ENCODE measurements at regions of chr15 and their contacts with region 1.

Region 1: DNA sequence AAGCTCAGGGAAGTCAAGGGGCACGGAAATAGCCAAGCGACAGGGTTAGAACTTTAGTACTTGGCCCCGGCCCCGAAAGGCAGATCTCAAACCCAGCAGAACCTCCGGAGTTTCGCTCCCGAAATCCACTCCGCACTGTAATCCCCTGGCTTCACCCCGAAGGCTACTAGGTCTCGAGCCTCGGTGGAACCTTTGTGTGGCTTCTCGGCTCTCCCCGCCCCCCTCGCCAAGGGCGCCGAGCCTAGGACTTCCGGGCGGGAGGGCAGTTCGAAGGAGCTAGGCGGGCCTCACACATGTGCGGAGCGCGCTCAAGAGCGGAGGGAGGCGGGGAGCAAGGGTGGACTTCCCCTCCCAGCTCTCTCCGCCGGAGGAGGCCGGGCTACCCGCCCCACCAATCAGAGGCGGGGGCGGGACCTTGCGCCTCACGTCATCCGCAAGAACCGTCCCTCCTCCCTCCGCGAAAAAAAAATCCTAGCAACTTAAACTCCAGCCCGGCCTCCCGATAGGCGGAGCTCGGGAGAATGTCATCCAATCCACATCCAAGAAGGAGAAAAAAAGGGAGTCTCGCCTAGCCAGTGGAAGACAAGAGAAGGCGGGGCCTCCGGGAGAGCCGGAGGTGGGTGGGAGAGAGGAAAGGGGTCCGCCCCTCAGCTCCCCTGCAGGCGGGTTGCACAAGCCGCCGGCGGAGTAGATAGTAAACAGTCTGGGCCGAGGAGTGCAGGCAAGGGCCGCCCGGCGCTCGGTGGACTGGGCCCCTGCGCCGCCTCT is 2.4 kb upstream of the SIN3A start:
- DNase-seq: peak; percentile 86 to 100 (median 99)
- ATAC-seq: peak; percentile 54
- H3K4me3 ChIP-seq: peak overlapping the region; percentile 89
- H3K4me3 Mint-ChIP-seq: peak overlapping the region; percentile 91 to 99 (median 96)
- H3K27ac ChIP-seq: peak overlapping the region; percentile 97
- H3K27ac Mint-ChIP-seq: peak overlapping the region; percentile 94 to 99 (median 98)
- H3K4me1 ChIP-seq: peaks cover 17 to 29% of the 10 kb centered on the region in 2 donors
- H3K4me1 Mint-ChIP-seq: peaks cover 19 to 40% (median 30%) of the 10 kb centered on the region in 7 donors
- H3K27me3 ChIP-seq: no peaks in the 10 kb centered on the region
- H3K27me3 Mint-ChIP-seq: peaks cover 0 to 2% (median 0%) of the 10 kb centered on the region in 5 donors

Region 2: GRCh38 chr15:73991726-73992593 is 1461.9 kb before region 1 on chr15 and contains the start of gene STOML1:
- CTCF ChIA-PET with region 1: no interaction called
- POLR2A ChIA-PET with region 1: no interaction called
- intact Hi-C with region 1: loop called in 1 of 2 experiments (anchors 5 kb)
- DNase-seq: peak; percentile 85 to 99 (median 91)
- ATAC-seq: peak; percentile 91
- H3K4me3 ChIP-seq: peak within 1 kb of the TSS; percentile 68
- H3K4me3 Mint-ChIP-seq: peak within 1 kb of the TSS; percentile 82 to 100 (median 98)
- H3K27ac ChIP-seq: peak within 1 kb of the TSS; percentile 90
- H3K27ac Mint-ChIP-seq: peak within 1 kb of the TSS; percentile 72 to 99 (median 87)
- H3K4me1 ChIP-seq: peaks cover 33 to 35% of the 10 kb centered on the region in 2 donors
- H3K4me1 Mint-ChIP-seq: peaks cover 28 to 62% (median 49%) of the 10 kb centered on the region in 7 donors
- H3K27me3 ChIP-seq: no peaks in the 10 kb centered on the region
- H3K27me3 Mint-ChIP-seq: no peaks in the 10 kb centered on the region
- total RNA-seq, gene STOML1: 7.5 to 14.5 (median 12.3) TPM

Region 3: DNA sequence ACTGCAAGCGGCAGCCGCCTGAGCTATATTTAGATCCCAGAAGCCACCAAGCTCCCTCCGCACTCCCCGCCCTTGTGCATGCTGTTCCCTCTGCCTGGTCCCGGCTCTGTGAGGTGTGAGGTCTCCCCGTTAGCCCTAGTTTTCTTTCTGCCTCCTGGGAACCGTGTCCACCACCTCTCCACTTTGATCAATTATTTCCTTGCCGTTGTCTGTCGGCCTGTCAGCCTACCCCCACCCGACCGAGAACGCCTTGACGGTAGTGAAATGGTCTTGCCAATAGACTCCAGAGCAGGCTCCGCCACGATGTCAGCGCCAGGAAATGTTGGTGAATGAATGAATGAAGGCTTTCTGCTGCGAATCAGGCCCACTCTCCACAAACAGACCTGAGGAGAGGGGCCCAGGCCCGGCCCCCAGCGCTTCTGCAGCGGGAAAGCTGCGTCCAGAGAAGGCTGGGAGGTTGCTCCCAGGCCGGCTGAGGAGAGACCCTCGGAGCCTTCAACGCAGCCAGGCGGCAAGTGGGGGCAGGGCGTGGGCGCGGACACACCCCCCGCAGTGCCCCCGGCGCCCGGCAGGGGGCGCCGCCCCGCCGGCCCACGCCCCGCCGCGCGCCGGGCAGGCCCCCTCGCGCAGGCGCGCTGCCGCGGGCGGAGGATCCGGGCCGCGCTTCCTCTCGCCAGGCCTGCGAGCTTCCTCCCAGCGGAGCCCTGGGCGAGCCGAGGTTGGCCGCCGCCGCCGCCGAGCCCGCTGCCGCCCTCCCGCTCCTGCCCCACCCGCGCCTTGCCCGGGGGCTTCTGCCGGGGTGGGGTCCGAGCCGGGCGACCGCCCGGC is 672.2 kb before region 1 on chr15 and contains the start of gene CSK:
- CTCF ChIA-PET with region 1: no interaction called
- POLR2A ChIA-PET with region 1: no interaction called
- intact Hi-C with region 1: loop called (anchors 2 kb)
- DNase-seq: peak; percentile 68 to 90 (median 85)
- ATAC-seq: peak; percentile 80
- H3K4me3 ChIP-seq: peak within 1 kb of the TSS; percentile 91
- H3K4me3 Mint-ChIP-seq: peak within 1 kb of the TSS; percentile 87 to 99 (median 96)
- H3K27ac ChIP-seq: peak within 1 kb of the TSS; percentile 92
- H3K27ac Mint-ChIP-seq: peak within 1 kb of the TSS; percentile 90 to 100 (median 98)
- H3K4me1 ChIP-seq: peaks cover 62% of the 10 kb centered on the region in 2 donors
- H3K4me1 Mint-ChIP-seq: peaks cover 64 to 73% (median 70%) of the 10 kb centered on the region in 7 donors
- H3K27me3 ChIP-seq: no peaks in the 10 kb centered on the region
- H3K27me3 Mint-ChIP-seq: no peaks in the 10 kb centered on the region
- total RNA-seq, gene CSK: 163 to 421 (median 228) TPM

Region 4: DNA sequence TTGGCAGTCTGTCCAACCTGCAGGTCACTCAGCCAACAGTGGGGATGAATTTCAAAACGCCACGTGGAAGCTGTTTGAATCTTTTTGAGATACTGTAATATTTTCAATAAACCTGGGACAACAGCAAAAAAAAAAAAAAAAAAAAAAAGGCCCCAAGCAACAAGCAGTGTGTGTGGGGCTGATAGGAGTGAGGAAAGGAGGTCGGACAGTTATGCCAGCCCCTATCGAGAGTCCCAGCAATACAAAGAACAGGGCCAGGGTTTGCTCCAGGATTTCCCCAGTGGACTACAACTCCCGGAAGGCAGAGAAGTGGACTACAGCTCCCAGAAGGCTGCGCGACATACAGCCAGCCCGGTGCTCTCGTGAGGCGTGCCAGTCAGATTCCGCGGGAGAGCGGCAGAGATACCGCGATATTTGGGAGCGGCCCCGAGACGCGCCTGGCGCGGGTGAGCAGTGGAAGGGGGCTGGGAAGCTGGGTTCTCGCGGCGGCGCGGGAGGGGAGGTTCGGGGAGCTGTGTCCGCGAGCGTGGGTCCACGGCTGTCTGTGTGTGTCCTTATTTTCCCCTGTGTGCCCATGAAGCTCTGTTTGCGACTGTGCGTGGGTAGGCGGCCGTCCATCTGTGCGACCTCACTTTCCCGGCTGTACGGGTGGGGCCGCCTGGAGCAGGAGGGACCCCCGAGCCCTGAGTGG is 430.6 kb before region 1 on chr15 and contains the start of gene PPCDC:
- CTCF ChIA-PET with region 1: interaction called, 3 read pairs
- POLR2A ChIA-PET with region 1: interaction called, 3 read pairs
- intact Hi-C with region 1: loop called in 1 of 2 experiments (anchors 1 kb)
- DNase-seq: peak; percentile 79 to 94 (median 91)
- ATAC-seq: peak; percentile 100
- H3K4me3 ChIP-seq: peak within 1 kb of the TSS; percentile 84
- H3K4me3 Mint-ChIP-seq: peak within 1 kb of the TSS; percentile 81 to 99 (median 97)
- H3K27ac ChIP-seq: peak within 1 kb of the TSS; percentile 84
- H3K27ac Mint-ChIP-seq: peak within 1 kb of the TSS; percentile 87 to 98 (median 93)
- H3K4me1 ChIP-seq: no peaks in the 10 kb centered on the region
- H3K4me1 Mint-ChIP-seq: peaks cover 11 to 30% (median 26%) of the 10 kb centered on the region in 7 donors
- H3K27me3 ChIP-seq: no peaks in the 10 kb centered on the region
- H3K27me3 Mint-ChIP-seq: no peaks in the 10 kb centered on the region
- total RNA-seq, gene PPCDC: 11.7 to 31.3 (median 17.1) TPM

Region 5: GRCh38 chr15:75302318-75302717 is 151.6 kb before region 1 on chr15:
- CTCF ChIA-PET with region 1: no interaction called
- POLR2A ChIA-PET with region 1: no interaction called
- intact Hi-C with region 1: no loop called
- DNase-seq: no peak
- ATAC-seq: no peak
- H3K4me3 ChIP-seq: no peak overlapping the region
- H3K4me3 Mint-ChIP-seq: no peak overlapping the region
- H3K27ac ChIP-seq: no peak overlapping the region
- H3K27ac Mint-ChIP-seq: no peak overlapping the region
- H3K4me1 ChIP-seq: no peaks in the 10 kb centered on the region
- H3K4me1 Mint-ChIP-seq: peaks cover 0 to 3% (median 0%) of the 10 kb centered on the region in 7 donors
- H3K27me3 ChIP-seq: no peaks in the 10 kb centered on the region
- H3K27me3 Mint-ChIP-seq: peaks cover 23 to 35% (median 25%) of the 10 kb centered on the region in 5 donors

Region 6: GRCh38 chr15:75436861-75437260 is 17.0 kb before region 1 on chr15:
- CTCF ChIA-PET with region 1: interaction called, 3 read pairs
- POLR2A ChIA-PET with region 1: interaction called, 6 read pairs
- intact Hi-C with region 1: loop called in 1 of 2 experiments (anchors 2 kb)
- DNase-seq: no peak
- ATAC-seq: no peak
- H3K4me3 ChIP-seq: no peak overlapping the region
- H3K4me3 Mint-ChIP-seq: peak overlapping the region in 1 of 10 donors; percentile 23
- H3K27ac ChIP-seq: no peak overlapping the region
- H3K27ac Mint-ChIP-seq: peak overlapping the region in 4 of 9 donors; percentile 32 to 78 (median 70)
- H3K4me1 ChIP-seq: peaks cover 3 to 10% of the 10 kb centered on the region in 2 donors
- H3K4me1 Mint-ChIP-seq: peaks cover 39 to 69% (median 60%) of the 10 kb centered on the region in 7 donors
- H3K27me3 ChIP-seq: no peaks in the 10 kb centered on the region
- H3K27me3 Mint-ChIP-seq: no peaks in the 10 kb centered on the region

Region 7: GRCh38 chr15:75639709-75640482 is 186.0 kb after region 1 on chr15 and contains the start of gene IMP3:
- CTCF ChIA-PET with region 1: interaction called, 6 read pairs
- POLR2A ChIA-PET with region 1: interaction called, 175 read pairs
- intact Hi-C with region 1: loop called (anchors 1 kb)
- DNase-seq: peak; percentile 75 to 96 (median 93)
- ATAC-seq: peak; percentile 95
- H3K4me3 ChIP-seq: peak within 1 kb of the TSS; percentile 97
- H3K4me3 Mint-ChIP-seq: peak within 1 kb of the TSS; percentile 84 to 98 (median 95)
- H3K27ac ChIP-seq: peak within 1 kb of the TSS; percentile 85
- H3K27ac Mint-ChIP-seq: peak within 1 kb of the TSS; percentile 39 to 98 (median 96)
- H3K4me1 ChIP-seq: peaks cover 23 to 24% of the 10 kb centered on the region in 2 donors
- H3K4me1 Mint-ChIP-seq: peaks cover 33 to 49% (median 39%) of the 10 kb centered on the region in 7 donors
- H3K27me3 ChIP-seq: no peaks in the 10 kb centered on the region
- H3K27me3 Mint-ChIP-seq: no peaks in the 10 kb centered on the region
- total RNA-seq, gene IMP3: 32.3 to 100 (median 89.5) TPM

Region 8: DNA sequence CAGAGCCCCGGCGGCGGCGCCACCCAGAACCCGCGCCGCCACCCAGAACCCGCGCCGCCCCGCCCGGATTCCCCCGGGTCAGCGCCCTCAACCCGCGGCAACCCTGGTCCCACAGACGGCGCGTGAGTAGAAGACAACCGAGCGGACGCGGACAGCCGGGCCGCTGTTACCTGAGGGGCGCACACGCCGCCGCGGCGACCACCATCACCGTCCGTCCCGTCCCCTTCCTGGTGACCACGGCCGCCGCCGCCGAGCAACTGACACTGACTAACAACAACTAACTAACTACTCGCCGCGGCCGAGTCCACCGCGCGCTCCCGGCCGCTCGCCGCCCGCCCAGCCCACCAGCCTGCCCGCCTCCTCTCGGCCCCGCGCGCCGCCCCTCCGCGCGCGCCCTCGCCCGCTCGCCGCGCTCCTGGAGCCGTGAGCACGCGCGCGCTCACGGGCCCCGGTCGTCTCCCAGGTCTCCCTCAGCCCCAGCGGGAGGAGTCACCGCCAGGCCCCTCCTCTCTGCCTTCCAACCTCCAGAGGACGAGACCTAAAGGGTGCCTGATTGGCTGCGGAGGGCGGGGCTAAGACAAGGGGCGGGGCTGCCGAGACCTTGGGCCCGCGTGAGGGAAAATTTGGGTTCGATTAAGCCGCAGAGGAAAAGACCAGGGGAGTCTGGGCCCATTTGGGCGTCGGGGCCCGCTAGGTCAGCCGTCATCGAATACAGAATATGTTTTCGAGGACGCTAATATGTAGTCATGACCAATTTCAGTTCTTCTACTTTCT is 1966.1 kb after region 1 on chr15 and contains the start of gene PEAK1:
- CTCF ChIA-PET with region 1: no interaction called
- POLR2A ChIA-PET with region 1: no interaction called
- intact Hi-C with region 1: loop called in 1 of 2 experiments (anchors 5 kb)
- DNase-seq: peak; percentile 94 to 100 (median 99)
- ATAC-seq: peak; percentile 99
- H3K4me3 ChIP-seq: peak within 1 kb of the TSS; percentile 74
- H3K4me3 Mint-ChIP-seq: peak within 1 kb of the TSS; percentile 93 to 99 (median 98)
- H3K27ac ChIP-seq: peak within 1 kb of the TSS; percentile 86
- H3K27ac Mint-ChIP-seq: peak within 1 kb of the TSS; percentile 91 to 98 (median 97)
- H3K4me1 ChIP-seq: peaks cover 5 to 12% of the 10 kb centered on the region in 2 donors
- H3K4me1 Mint-ChIP-seq: peaks cover 21 to 50% (median 47%) of the 10 kb centered on the region in 7 donors
- H3K27me3 ChIP-seq: no peaks in the 10 kb centered on the region
- H3K27me3 Mint-ChIP-seq: peaks cover 0 to 4% (median 0%) of the 10 kb centered on the region in 5 donors
- total RNA-seq, gene PEAK1: 11.1 to 31.0 (median 15.0) TPM

Measured in naive thymus-derived CD4-positive, alpha-beta T cell (primary cell).